ENCODE measurements at regions of chr15 and their contacts with region 1.

Region 1: DNA sequence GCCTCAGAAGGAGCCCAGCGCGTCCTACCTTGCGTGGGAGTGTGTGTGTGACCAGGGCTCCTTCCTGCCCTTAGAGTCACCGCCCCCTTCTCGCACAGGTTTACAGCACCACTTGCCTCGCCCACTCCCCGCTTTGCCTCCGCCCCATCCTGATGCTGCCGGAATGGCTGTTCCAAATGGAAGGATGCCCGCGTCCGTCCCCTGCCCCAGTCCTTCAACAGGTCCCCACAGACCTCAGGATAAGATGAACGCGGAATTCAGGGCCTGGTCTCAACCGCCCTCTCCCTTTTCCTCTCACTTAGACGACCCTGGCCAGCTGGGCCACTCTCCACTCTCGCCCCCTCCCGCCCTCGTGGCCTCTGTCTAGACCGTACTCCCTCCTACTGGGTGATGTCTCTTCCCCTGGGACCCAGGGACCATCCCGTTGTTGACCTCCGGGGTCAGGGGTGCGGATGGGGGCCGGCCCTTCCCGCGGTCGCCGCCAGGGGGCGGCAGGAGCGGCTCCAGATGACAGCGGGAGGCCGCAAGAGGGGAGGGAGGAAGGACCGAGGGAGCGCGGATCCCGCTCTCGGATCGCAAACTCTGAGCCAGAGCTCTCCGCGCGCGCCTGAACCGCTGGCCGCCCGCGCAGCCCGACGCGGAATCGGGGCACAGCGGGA is at the start of gene THSD4:
- DNase-seq: peak; percentile 25
- ATAC-seq: peak; percentile 92
- H3K4me3 ChIP-seq: peak within 1 kb of the TSS in 2 of 3 experiments; percentile 23 to 54; a peak in 2 of 6 replicates
- H3K27ac ChIP-seq: no peak within 1 kb of the TSS
- H3K4me1 ChIP-seq: no peaks in the 10 kb centered on the region
- H3K27me3 ChIP-seq: peaks cover 0 to 15% of the 10 kb centered on the region in 2 experiments; a peak in 4 of 5 replicates
- CTCF ChIP-seq: peak; percentile 88
- EP300 ChIP-seq: no peak
- POLR2A ChIP-seq: no peak
- RAD21 ChIP-seq: peak; percentile 77
- total RNA-seq, gene THSD4: 0.07 TPM in 2 replicates

Region 2: DNA sequence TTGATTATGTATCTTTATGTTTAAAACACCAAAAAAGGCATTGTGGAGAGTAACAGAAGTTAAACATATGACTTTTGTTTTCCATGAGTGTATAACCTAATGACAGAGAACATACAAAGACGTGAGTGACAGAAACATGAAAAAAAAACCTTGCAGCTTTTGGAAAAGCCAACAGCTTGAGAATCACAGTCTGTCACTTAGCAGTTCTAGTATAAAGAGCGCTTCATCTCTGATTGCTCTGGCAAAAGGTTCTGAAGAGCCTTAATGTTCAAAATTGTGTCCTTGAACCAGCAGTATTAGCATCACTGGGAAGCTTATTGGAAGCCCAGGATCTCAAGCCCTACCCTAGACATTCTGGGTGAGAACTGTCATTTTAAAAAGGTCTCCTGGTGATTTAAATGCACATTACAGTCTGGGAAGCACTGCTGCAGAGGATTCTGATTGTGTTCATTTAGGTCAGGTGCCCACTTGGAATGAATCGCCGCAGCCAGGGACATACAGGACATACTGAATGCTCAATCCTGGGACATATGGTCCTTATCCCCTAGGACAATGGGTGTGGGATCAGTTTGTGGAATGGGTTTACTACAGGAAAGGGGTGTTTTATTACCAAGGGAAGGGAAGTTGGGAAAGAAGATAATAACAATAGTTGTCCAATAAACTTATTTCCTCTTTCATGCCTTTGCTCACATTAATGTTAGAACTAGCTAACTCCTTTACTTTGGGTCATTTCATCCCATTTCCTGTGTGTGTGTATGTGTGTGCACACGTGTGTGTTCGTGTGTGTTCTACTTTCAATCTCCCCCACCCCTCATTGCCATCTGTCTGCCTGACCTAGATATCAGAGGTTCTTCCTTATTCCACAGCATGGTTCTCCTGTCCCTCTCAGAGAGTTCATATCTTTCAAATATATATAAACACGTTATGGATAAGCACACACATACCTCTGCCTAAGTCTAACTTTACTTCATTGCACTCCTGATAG is 167.4 kb before region 1 on chr15:
- CTCF ChIA-PET with region 1: no interaction called
- POLR2A ChIA-PET with region 1: no interaction called
- in situ Hi-C with region 1: no loop called
- intact Hi-C with region 1: no loop called
- DNase-seq: no peak
- ATAC-seq: no peak
- H3K4me3 ChIP-seq: no peak overlapping the region
- H3K27ac ChIP-seq: no peak overlapping the region
- H3K4me1 ChIP-seq: no peaks in the 10 kb centered on the region
- H3K27me3 ChIP-seq: no peaks in the 10 kb centered on the region
- CTCF ChIP-seq: no peak
- EP300 ChIP-seq: no peak
- POLR2A ChIP-seq: no peak
- RAD21 ChIP-seq: no peak

Region 3: GRCh38 chr15:71136159-71136783 is 21.2 kb after region 1 on chr15:
- CTCF ChIA-PET with region 1: no interaction called
- POLR2A ChIA-PET with region 1: no interaction called
- in situ Hi-C with region 1: no loop called
- intact Hi-C with region 1: no loop called
- DNase-seq: no peak
- ATAC-seq: no peak
- H3K4me3 ChIP-seq: no peak overlapping the region
- H3K27ac ChIP-seq: no peak overlapping the region
- H3K4me1 ChIP-seq: no peaks in the 10 kb centered on the region
- H3K27me3 ChIP-seq: peaks cover 1 to 7% of the 10 kb centered on the region in 2 experiments; a peak in 1 of 5 replicates
- CTCF ChIP-seq: no peak
- EP300 ChIP-seq: no peak
- POLR2A ChIP-seq: no peak
- RAD21 ChIP-seq: no peak

Region 4: GRCh38 chr15:71443538-71443937 is 328.5 kb after region 1 on chr15:
- CTCF ChIA-PET with region 1: interaction called, 42 read pairs
- POLR2A ChIA-PET with region 1: no interaction called
- in situ Hi-C with region 1: loop called (anchors 5 kb)
- intact Hi-C with region 1: no loop called
- DNase-seq: peak; percentile 23
- ATAC-seq: peak; percentile 31; the same call in 1 of the 3 replicates
- H3K4me3 ChIP-seq: no peak overlapping the region
- H3K27ac ChIP-seq: no peak overlapping the region
- H3K4me1 ChIP-seq: peaks cover 49% of the 10 kb centered on the region
- H3K27me3 ChIP-seq: no peaks in the 10 kb centered on the region
- CTCF ChIP-seq: peak; percentile 59
- EP300 ChIP-seq: no peak
- POLR2A ChIP-seq: no peak
- RAD21 ChIP-seq: no peak